GM10248 (cell line): ENCODE measurements at regions of chr10 and their contacts with region 1.

Region 1: DNA sequence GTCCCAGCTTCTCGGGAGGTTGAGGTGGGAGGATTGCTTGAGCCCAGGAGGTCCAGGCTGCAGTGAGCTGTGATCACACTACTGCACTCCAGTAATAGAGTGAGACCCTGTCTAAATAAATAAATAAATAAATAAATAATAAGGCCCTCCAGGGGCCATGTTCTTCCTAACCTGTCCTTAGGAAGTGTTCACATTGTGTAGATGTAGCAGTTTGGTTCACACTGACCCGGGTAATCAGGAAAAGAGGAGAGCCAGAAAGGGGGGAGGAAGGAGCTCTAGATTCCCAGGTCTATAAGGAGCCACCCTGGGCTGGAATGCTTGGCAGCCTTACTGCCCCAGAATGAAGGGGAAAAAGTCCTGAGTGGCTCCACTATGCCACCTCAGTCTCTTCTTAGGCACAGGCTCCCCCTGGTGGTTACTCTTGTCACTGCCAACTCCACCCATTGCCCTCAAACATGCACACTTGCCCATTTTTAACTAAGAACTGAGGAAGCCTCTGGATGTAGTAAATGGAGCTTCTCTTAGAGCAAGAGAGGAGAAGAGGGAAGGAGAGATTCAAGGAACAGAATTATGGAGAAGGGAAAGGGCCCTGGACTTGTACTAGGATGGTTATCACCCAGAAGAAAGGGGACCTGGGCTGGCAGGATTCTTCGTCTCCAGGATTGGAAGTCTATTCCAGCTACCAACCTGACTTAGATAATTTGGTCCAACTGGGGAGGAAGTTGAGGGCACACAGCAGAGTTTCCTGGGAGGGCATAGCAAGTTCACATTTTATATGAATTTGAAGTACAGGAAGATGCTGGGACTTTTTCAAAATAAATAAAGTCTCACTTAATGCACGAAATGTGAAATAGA is 7.8 kb downstream of the HPS6 start:
- DNase-seq: peak; percentile 83
- CTCF ChIP-seq: peak; percentile 88

Region 2: DNA sequence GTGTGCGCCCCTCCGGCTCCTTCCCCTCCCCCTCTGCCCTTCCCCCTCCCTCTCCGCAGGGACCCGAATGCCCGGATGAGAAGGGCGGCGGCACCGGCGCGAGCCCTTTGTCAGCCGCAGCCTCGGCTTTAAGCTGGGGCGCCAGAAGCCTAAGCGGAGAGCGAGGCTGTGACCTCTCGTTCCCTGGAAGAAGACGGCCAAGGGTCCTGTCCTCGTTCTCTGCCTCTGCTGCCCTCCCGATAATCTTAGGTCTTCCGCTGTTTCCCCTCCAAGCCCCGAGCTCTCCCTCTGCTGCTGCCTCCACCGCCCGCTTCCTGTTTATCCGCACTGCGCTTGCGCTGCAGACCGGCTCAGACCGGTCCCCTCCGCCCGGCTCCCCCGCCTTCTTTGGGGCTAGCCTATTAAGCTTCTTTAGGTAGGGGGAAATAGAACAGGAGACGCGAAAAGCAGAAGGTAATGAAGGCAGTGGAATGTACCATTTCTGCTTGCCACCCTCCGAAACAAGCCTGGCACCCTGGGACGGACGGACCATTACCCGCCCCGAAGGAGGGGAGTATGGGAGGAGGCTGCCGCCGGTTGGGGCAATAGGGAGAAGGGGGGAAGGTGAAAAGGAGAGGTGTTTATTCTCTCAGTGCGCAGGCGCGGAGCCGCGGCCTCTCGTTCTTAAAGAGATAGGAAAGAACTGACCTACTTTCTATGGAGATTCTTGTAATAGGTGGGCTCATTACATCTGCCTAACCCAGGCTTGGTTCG is 254.6 kb before region 1 on chr10 and contains the start of gene OGA:
- CTCF ChIA-PET with region 1: interaction called, 12 read pairs
- POLR2A ChIA-PET with region 1: no interaction called
- DNase-seq: peak; percentile 94
- CTCF ChIP-seq: no peak

Region 3: GRCh38 chr10:102085336-102085735 is 12.4 kb after region 1 on chr10:
- CTCF ChIA-PET with region 1: interaction called, 56 read pairs
- POLR2A ChIA-PET with region 1: interaction called, 3 read pairs
- DNase-seq: no peak
- CTCF ChIP-seq: no peak

Region 4: DNA sequence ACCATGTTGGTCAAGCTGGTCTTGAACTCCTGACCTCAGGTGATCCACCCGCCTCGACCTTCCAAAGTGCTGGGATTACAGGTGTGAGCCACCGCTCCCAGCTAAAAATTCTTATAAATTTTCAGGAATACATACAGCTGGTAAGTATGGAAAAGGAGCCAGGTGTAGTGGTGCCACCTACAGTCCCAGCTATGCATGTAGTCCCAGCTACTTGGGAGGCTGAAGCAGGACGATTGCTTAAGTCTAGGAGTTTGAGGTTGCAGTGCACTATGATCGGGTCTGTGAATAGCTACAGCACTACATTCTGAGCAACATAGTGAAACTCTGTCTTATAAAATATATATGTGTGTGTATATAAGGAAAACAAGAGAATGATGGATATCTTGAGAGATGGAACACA is 28.3 kb after region 1 on chr10:
- CTCF ChIA-PET with region 1: interaction called, 65 read pairs
- POLR2A ChIA-PET with region 1: no interaction called
- DNase-seq: no peak
- CTCF ChIP-seq: no peak